Naive thymus-derived CD4-positive, alpha-beta T cell (primary cell): ENCODE measurements at regions of chr6 and their contacts with region 1.

Region 1: DNA sequence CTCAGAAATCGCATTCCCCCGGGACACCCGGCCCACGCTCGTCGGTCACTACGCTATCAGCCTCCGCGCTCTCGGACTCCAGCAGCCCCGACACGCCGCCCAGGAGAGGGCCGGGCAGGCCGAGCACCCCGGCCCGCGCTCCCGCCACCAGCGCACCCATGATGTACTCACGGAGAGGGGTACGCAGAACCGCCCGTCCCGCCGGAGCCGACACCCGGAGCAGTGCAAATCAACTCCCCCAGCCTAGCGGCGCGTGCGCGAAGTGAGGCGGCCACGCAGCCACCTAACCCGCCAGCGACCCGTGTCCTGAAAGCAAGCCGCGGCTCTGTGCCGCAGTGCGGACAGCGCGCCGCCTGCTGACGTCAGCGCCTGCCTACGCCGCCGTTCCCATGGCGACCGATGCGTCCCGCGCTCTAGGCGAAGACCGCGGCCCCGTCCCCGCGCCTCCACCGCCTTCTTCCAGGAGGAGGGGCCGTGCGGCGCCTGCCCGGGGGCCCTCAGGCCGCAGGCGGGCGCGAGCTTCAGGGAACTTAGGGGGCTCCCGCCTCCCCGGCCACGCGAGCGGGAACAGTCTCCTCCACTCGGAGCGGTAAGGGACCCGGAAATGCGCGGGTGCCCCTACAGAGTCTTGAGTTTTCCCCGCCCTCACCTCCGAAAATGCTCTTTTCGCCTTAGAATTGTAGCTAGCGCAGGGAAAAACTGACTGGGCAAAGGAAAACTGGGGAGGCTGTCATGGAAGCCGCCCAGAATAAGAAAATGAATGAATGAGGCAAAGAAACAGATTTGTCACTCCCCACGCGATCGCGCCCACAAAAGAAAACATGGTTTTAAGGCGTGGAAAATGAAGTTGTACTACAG is at the start of gene AHI1:
- DNase-seq: peak; percentile 65 to 94 (median 85)
- ATAC-seq: peak; percentile 89
- H3K4me3 ChIP-seq: peak within 1 kb of the TSS; percentile 64
- H3K4me3 Mint-ChIP-seq: peak within 1 kb of the TSS in 4 of 10 donors; percentile 32 to 53 (median 37)
- H3K27ac ChIP-seq: peak within 1 kb of the TSS; percentile 95
- H3K27ac Mint-ChIP-seq: no peak within 1 kb of the TSS
- H3K4me1 ChIP-seq: peaks cover 0 to 5% of the 10 kb centered on the region in 2 donors
- H3K4me1 Mint-ChIP-seq: peaks cover 4 to 19% (median 9%) of the 10 kb centered on the region in 7 donors
- H3K27me3 ChIP-seq: no peaks in the 10 kb centered on the region
- H3K27me3 Mint-ChIP-seq: peaks cover 0 to 3% (median 0%) of the 10 kb centered on the region in 5 donors
- total RNA-seq, gene AHI1: 12.5 to 31.3 (median 26.3) TPM

Region 2: DNA sequence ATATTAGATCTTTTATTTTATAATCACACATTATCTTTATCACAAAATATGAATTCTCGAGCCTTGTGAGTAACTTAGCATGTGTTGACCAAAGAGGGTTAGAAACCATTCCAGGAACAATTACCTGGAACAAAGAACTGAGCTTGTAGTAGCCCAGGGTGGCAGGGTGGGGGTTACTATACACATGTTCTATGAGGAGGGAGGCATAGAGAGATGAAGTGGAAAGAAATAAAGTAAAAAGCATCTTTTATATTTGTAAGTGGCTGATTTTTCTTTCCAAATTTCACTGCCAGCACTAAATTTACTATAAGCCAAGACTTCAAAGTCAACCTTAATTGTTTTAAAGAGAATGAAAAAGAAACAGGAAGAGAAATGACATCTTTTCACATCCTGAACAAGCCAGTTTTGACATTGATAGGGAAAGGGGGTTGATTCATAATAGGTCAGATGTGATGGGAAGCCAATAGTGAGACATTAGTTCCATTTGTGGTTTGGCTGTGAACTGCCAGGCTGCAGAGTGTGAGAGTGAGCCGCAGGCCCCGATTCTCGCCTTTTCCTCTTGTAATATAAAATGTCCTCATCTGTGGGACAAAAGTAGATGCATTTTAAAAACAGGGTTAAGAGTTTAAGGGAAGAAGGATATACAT is 369.2 kb before region 1 on chr6:
- CTCF ChIA-PET with region 1: no interaction called
- POLR2A ChIA-PET with region 1: no interaction called
- intact Hi-C with region 1: loop called in 1 of 2 experiments (anchors 2 kb)
- DNase-seq: peak in 8 of 9 donors; percentile 53 to 73 (median 66)
- ATAC-seq: peak; percentile 92
- H3K4me3 ChIP-seq: peak overlapping the region; percentile 36
- H3K4me3 Mint-ChIP-seq: peak overlapping the region; percentile 46 to 93 (median 77)
- H3K27ac ChIP-seq: peak overlapping the region; percentile 75
- H3K27ac Mint-ChIP-seq: peak overlapping the region; percentile 95 to 98 (median 97)
- H3K4me1 ChIP-seq: peaks cover 18 to 22% of the 10 kb centered on the region in 2 donors
- H3K4me1 Mint-ChIP-seq: peaks cover 26 to 64% (median 55%) of the 10 kb centered on the region in 7 donors
- H3K27me3 ChIP-seq: no peaks in the 10 kb centered on the region
- H3K27me3 Mint-ChIP-seq: no peaks in the 10 kb centered on the region

Region 3: GRCh38 chr6:135451693-135452092 is 45.9 kb before region 1 on chr6:
- CTCF ChIA-PET with region 1: no interaction called
- POLR2A ChIA-PET with region 1: interaction called, 3 read pairs
- intact Hi-C with region 1: loop called (anchors 1 to 2 kb)
- DNase-seq: peak in 6 of 9 donors; percentile 13 to 54 (median 44)
- ATAC-seq: peak; percentile 63
- H3K4me3 ChIP-seq: no peak overlapping the region
- H3K4me3 Mint-ChIP-seq: no peak overlapping the region
- H3K27ac ChIP-seq: no peak overlapping the region
- H3K27ac Mint-ChIP-seq: no peak overlapping the region
- H3K4me1 ChIP-seq: no peaks in the 10 kb centered on the region
- H3K4me1 Mint-ChIP-seq: peaks cover 0 to 4% (median 0%) of the 10 kb centered on the region in 7 donors
- H3K27me3 ChIP-seq: no peaks in the 10 kb centered on the region
- H3K27me3 Mint-ChIP-seq: no peaks in the 10 kb centered on the region

Region 4: DNA sequence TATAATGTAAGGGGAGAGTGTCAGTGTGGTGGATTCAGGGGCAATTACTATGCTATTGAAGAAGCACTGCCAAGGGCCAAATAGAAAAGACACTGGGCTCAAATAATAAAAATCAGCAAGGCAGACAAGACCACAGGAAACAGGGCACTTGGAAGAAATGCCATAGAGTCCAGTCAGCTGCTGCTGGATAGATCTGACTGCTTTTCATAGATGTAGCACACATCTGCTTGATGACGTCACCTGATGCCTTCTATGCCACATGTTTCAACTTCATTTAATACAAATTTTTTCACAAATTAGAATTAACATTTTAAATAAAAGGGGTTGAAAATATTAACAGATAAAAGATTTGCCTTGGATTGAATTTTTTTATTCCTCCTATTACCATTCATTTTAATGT is 23.8 kb after region 1 on chr6:
- CTCF ChIA-PET with region 1: no interaction called
- POLR2A ChIA-PET with region 1: no interaction called
- intact Hi-C with region 1: no loop called
- DNase-seq: no peak
- ATAC-seq: no peak
- H3K4me3 ChIP-seq: no peak overlapping the region
- H3K4me3 Mint-ChIP-seq: no peak overlapping the region
- H3K27ac ChIP-seq: no peak overlapping the region
- H3K27ac Mint-ChIP-seq: no peak overlapping the region
- H3K4me1 ChIP-seq: no peaks in the 10 kb centered on the region
- H3K4me1 Mint-ChIP-seq: peaks cover 0 to 11% (median 0%) of the 10 kb centered on the region in 7 donors
- H3K27me3 ChIP-seq: no peaks in the 10 kb centered on the region
- H3K27me3 Mint-ChIP-seq: no peaks in the 10 kb centered on the region

Region 5: DNA sequence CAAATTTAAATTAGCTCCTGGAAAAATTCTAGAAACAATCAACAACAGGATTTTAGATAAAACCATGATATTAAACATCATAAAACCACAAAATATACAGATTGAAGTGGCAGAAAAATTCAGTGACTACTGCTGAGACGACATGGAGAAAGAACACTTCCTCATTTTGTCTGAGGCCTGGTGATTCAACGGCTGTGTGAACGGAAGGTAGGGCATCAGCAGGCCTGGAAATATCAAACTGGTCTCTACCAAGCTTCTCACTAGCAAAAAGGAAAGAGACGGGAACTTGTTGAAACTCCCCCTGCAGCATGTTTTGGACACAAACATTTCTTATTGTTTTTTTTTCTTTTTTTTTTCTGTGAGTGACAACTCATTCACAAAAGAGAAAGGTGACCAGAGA is 57.9 kb after region 1 on chr6:
- CTCF ChIA-PET with region 1: no interaction called
- POLR2A ChIA-PET with region 1: no interaction called
- intact Hi-C with region 1: no loop called
- DNase-seq: no peak
- ATAC-seq: peak; percentile 63
- H3K4me3 ChIP-seq: no peak overlapping the region
- H3K4me3 Mint-ChIP-seq: no peak overlapping the region
- H3K27ac ChIP-seq: no peak overlapping the region
- H3K27ac Mint-ChIP-seq: no peak overlapping the region
- H3K4me1 ChIP-seq: no peaks in the 10 kb centered on the region
- H3K4me1 Mint-ChIP-seq: peaks cover 0 to 37% (median 0%) of the 10 kb centered on the region in 7 donors
- H3K27me3 ChIP-seq: no peaks in the 10 kb centered on the region
- H3K27me3 Mint-ChIP-seq: peaks cover 0 to 11% (median 0%) of the 10 kb centered on the region in 5 donors

Region 6: GRCh38 chr6:135568366-135568765 is 70.7 kb after region 1 on chr6:
- CTCF ChIA-PET with region 1: no interaction called
- POLR2A ChIA-PET with region 1: no interaction called
- intact Hi-C with region 1: loop called in 1 of 2 experiments (anchors 5 kb)
- DNase-seq: peak in 8 of 9 donors; percentile 27 to 63 (median 44)
- ATAC-seq: peak; percentile 85
- H3K4me3 ChIP-seq: no peak overlapping the region
- H3K4me3 Mint-ChIP-seq: peak overlapping the region in 3 of 10 donors; percentile 5 to 57 (median 13)
- H3K27ac ChIP-seq: no peak overlapping the region
- H3K27ac Mint-ChIP-seq: peak overlapping the region in 4 of 9 donors; percentile 16 to 90 (median 18)
- H3K4me1 ChIP-seq: peaks cover 0 to 9% of the 10 kb centered on the region in 2 donors
- H3K4me1 Mint-ChIP-seq: peaks cover 0 to 77% (median 7%) of the 10 kb centered on the region in 7 donors
- H3K27me3 ChIP-seq: no peaks in the 10 kb centered on the region
- H3K27me3 Mint-ChIP-seq: no peaks in the 10 kb centered on the region

Region 7: GRCh38 chr6:135624402-135625295 is 127.0 kb after region 1 on chr6:
- CTCF ChIA-PET with region 1: no interaction called
- POLR2A ChIA-PET with region 1: no interaction called
- intact Hi-C with region 1: loop called in 1 of 2 experiments (anchors 1 kb)
- DNase-seq: peak in 3 of 9 donors; percentile 1 to 9 (median 7)
- ATAC-seq: no peak
- H3K4me3 ChIP-seq: no peak overlapping the region
- H3K4me3 Mint-ChIP-seq: peak overlapping the region in 2 of 10 donors; percentile 2 to 17
- H3K27ac ChIP-seq: no peak overlapping the region
- H3K27ac Mint-ChIP-seq: peak overlapping the region in 3 of 9 donors; percentile 13 to 91 (median 47)
- H3K4me1 ChIP-seq: no peaks in the 10 kb centered on the region
- H3K4me1 Mint-ChIP-seq: peaks cover 5 to 51% (median 16%) of the 10 kb centered on the region in 7 donors
- H3K27me3 ChIP-seq: no peaks in the 10 kb centered on the region
- H3K27me3 Mint-ChIP-seq: no peaks in the 10 kb centered on the region

Region 8: GRCh38 chr6:135880066-135880972 is 382.7 kb after region 1 on chr6:
- CTCF ChIA-PET with region 1: no interaction called
- POLR2A ChIA-PET with region 1: no interaction called
- intact Hi-C with region 1: loop called (anchors 1 to 10 kb)
- DNase-seq: peak in 8 of 9 donors; percentile 52 to 86 (median 79)
- ATAC-seq: peak; percentile 95
- H3K4me3 ChIP-seq: peak overlapping the region; percentile 40
- H3K4me3 Mint-ChIP-seq: peak overlapping the region; percentile 81 to 94 (median 86)
- H3K27ac ChIP-seq: peak overlapping the region; percentile 90
- H3K27ac Mint-ChIP-seq: peak overlapping the region; percentile 94 to 99 (median 98)
- H3K4me1 ChIP-seq: peaks cover 16 to 37% of the 10 kb centered on the region in 2 donors
- H3K4me1 Mint-ChIP-seq: peaks cover 31 to 90% (median 79%) of the 10 kb centered on the region in 7 donors
- H3K27me3 ChIP-seq: no peaks in the 10 kb centered on the region
- H3K27me3 Mint-ChIP-seq: no peaks in the 10 kb centered on the region

Region 9: GRCh38 chr6:136249811-136250685 is 752.4 kb after region 1 on chr6 and contains the start of gene MTFR2:
- CTCF ChIA-PET with region 1: no interaction called
- POLR2A ChIA-PET with region 1: no interaction called
- intact Hi-C with region 1: loop called (anchors 1 kb)
- DNase-seq: peak; percentile 74 to 97 (median 93)
- ATAC-seq: peak; percentile 95
- H3K4me3 ChIP-seq: peak within 1 kb of the TSS; percentile 81
- H3K4me3 Mint-ChIP-seq: peak within 1 kb of the TSS; percentile 91 to 99 (median 94)
- H3K27ac ChIP-seq: peak within 1 kb of the TSS; percentile 59
- H3K27ac Mint-ChIP-seq: peak within 1 kb of the TSS; percentile 47 to 89 (median 80)
- H3K4me1 ChIP-seq: peaks cover 7 to 15% of the 10 kb centered on the region in 2 donors
- H3K4me1 Mint-ChIP-seq: peaks cover 6 to 62% (median 43%) of the 10 kb centered on the region in 7 donors
- H3K27me3 ChIP-seq: no peaks in the 10 kb centered on the region
- H3K27me3 Mint-ChIP-seq: no peaks in the 10 kb centered on the region
- total RNA-seq, gene MTFR2: 0.92 to 20.4 (median 1.9) TPM